CD4-positive, alpha-beta memory T cell (primary cell): ENCODE measurements at regions of chr3 and their contacts with region 1.

Region 1: GRCh38 chr3:39406368-39407258 is at the start of gene RPSA:
- DNase-seq: peak; percentile 91 to 99 (median 99)
- H3K4me3 ChIP-seq: peak within 1 kb of the TSS; percentile 31 to 72
- H3K4me3 Mint-ChIP-seq: peak within 1 kb of the TSS; percentile 88 to 99 (median 96)
- H3K27ac ChIP-seq: peak within 1 kb of the TSS; percentile 81
- H3K27ac Mint-ChIP-seq: peak within 1 kb of the TSS; percentile 88 to 99 (median 98)
- H3K4me1 ChIP-seq: peaks cover 47% of the 10 kb centered on the region
- H3K4me1 Mint-ChIP-seq: peaks cover 30 to 54% (median 43%) of the 10 kb centered on the region in 4 donors
- H3K27me3 ChIP-seq: no peaks in the 10 kb centered on the region
- H3K27me3 Mint-ChIP-seq: no peaks in the 10 kb centered on the region
- total RNA-seq, gene RPSA: 1,582 to 1,688 TPM

Region 2: DNA sequence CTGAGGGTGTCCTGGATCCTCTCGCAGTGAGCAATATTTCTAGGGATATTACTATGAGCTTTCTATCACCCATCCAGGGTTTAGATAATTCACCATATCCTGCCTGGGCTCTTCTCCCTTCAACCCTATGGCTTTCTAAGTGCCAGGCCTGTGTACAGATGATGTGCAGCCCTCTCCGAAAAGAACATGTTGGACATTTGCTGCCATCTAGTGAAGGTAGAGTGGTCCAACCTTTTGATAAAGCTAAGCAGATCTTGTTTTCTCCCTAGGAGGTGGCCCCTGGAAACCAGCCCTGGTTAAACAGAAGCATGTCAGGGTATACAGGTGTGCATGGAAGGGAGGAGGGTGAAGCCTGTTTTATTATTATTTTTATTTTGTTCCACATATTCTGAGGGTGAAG is 562.7 kb before region 1 on chr3:
- CTCF ChIA-PET with region 1: no interaction called
- POLR2A ChIA-PET with region 1: no interaction called
- intact Hi-C with region 1: no loop called
- DNase-seq: no peak
- H3K4me3 ChIP-seq: no peak overlapping the region
- H3K4me3 Mint-ChIP-seq: no peak overlapping the region
- H3K27ac ChIP-seq: no peak overlapping the region
- H3K27ac Mint-ChIP-seq: no peak overlapping the region
- H3K4me1 ChIP-seq: no peaks in the 10 kb centered on the region
- H3K4me1 Mint-ChIP-seq: no peaks in the 10 kb centered on the region
- H3K27me3 ChIP-seq: no peaks in the 10 kb centered on the region
- H3K27me3 Mint-ChIP-seq: peaks cover 7 to 12% of the 10 kb centered on the region in 2 donors

Region 3: DNA sequence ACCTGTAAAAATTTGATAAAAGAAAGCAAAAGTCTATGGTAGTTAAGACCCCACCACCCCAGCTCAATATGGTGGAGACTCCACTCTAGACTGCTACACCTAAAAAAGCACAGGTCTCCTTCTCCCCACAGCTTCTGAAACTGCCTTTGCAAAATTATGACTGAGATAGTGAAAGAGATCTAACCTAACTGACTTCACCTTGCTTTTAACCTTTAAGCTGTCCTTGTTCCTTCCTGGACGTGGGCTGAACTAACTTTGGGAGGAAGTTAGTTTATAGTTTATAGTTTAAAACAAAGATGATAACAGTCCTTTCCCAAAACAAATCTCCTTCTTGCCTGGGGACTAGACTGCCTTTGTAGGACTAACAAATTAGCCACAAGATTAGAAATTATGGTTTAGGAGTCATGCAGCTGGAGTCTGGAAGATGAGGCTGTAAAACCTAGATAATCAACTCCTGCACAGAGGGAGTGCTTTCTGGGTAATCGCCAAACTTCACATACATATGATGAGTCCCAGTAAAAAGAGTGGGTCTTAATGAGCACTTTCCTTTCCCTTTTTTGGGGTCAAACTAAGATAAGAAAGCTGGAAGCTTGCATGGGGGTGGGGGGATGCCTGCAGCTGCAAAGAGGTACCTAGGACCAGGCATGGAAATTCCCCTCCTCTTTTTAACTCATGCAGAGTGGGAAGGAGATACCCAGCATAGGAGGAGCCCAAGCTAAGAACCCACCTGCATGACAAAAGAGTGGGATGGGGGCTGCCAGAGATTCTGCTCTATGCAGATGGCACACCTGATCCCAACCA is 59.6 kb before region 1 on chr3:
- CTCF ChIA-PET with region 1: no interaction called
- POLR2A ChIA-PET with region 1: no interaction called
- intact Hi-C with region 1: no loop called
- DNase-seq: no peak
- H3K4me3 ChIP-seq: no peak overlapping the region
- H3K4me3 Mint-ChIP-seq: peak overlapping the region in 4 of 8 donors; percentile 2 to 55 (median 32)
- H3K27ac ChIP-seq: no peak overlapping the region
- H3K27ac Mint-ChIP-seq: peak overlapping the region; percentile 0 to 78 (median 31)
- H3K4me1 ChIP-seq: peaks cover 24% of the 10 kb centered on the region
- H3K4me1 Mint-ChIP-seq: peaks cover 9 to 57% (median 32%) of the 10 kb centered on the region in 4 donors
- H3K27me3 ChIP-seq: no peaks in the 10 kb centered on the region
- H3K27me3 Mint-ChIP-seq: no peaks in the 10 kb centered on the region

Region 4: GRCh38 chr3:39383045-39383880 is 23.4 kb before region 1 on chr3 and contains the start of gene SLC25A38:
- CTCF ChIA-PET with region 1: interaction called, 17 read pairs
- POLR2A ChIA-PET with region 1: interaction called, 75 read pairs
- intact Hi-C with region 1: loop called (anchors 1 kb)
- DNase-seq: peak; percentile 82 to 90 (median 85)
- H3K4me3 ChIP-seq: peak within 1 kb of the TSS; percentile 91 to 92
- H3K4me3 Mint-ChIP-seq: peak within 1 kb of the TSS; percentile 96 to 100 (median 98)
- H3K27ac ChIP-seq: peak within 1 kb of the TSS; percentile 93
- H3K27ac Mint-ChIP-seq: peak within 1 kb of the TSS; percentile 97 to 100 (median 100)
- H3K4me1 ChIP-seq: peaks cover 46% of the 10 kb centered on the region
- H3K4me1 Mint-ChIP-seq: peaks cover 31 to 53% (median 44%) of the 10 kb centered on the region in 4 donors
- H3K27me3 ChIP-seq: no peaks in the 10 kb centered on the region
- H3K27me3 Mint-ChIP-seq: no peaks in the 10 kb centered on the region
- total RNA-seq, gene SLC25A38: 46.0 to 53.5 TPM

Region 5: GRCh38 chr3:39497753-39498152 is 91.1 kb after region 1 on chr3:
- CTCF ChIA-PET with region 1: interaction called, 4 read pairs
- POLR2A ChIA-PET with region 1: no interaction called
- intact Hi-C with region 1: loop called (anchors 1 kb)
- DNase-seq: no peak
- H3K4me3 ChIP-seq: no peak overlapping the region
- H3K4me3 Mint-ChIP-seq: no peak overlapping the region
- H3K27ac ChIP-seq: no peak overlapping the region
- H3K27ac Mint-ChIP-seq: no peak overlapping the region
- H3K4me1 ChIP-seq: no peaks in the 10 kb centered on the region
- H3K4me1 Mint-ChIP-seq: peaks cover 0 to 3% (median 1%) of the 10 kb centered on the region in 4 donors
- H3K27me3 ChIP-seq: peaks cover 12% of the 10 kb centered on the region
- H3K27me3 Mint-ChIP-seq: peaks cover 27 to 32% of the 10 kb centered on the region in 2 donors

Region 6: DNA sequence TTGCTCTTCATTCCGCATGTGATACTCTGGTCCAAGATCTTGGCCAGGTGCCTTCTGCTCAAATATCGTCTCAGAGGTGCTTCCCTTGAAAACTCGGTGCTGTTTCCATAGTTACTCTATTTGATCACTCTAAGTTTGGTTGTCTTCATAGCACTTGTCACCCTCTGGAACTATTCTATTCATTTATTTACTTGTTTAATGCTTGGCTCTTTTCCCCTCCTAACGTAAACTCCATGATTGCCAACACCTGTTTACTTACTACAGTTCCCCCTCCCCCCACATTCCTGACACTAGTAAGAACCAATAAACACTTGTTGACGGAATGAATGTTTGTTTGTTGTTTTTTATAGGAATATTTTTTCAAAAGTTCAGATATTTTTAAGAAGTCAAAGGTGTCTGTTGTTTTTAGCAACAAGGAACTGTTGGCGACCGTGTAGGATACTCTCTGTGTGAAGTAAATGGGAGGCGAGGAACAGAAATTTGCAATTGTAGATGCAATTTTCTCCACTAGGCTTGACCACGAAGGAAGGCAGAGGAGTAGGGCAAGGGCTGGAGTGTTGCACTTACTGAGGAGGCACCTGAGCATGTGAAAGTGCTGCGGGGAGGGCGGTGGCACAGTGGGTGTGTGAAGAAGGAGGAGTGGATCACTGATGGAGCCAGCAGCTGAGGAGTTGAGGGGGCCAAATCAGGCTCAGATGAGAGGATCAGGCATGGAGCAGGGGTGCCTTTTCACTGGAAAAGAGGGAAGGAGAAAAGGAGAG is 109.2 kb after region 1 on chr3:
- CTCF ChIA-PET with region 1: no interaction called
- POLR2A ChIA-PET with region 1: no interaction called
- intact Hi-C with region 1: no loop called
- DNase-seq: no peak
- H3K4me3 ChIP-seq: no peak overlapping the region
- H3K4me3 Mint-ChIP-seq: no peak overlapping the region
- H3K27ac ChIP-seq: no peak overlapping the region
- H3K27ac Mint-ChIP-seq: no peak overlapping the region
- H3K4me1 ChIP-seq: no peaks in the 10 kb centered on the region
- H3K4me1 Mint-ChIP-seq: peaks cover 0 to 2% (median 0%) of the 10 kb centered on the region in 4 donors
- H3K27me3 ChIP-seq: no peaks in the 10 kb centered on the region
- H3K27me3 Mint-ChIP-seq: peaks cover 12% of the 10 kb centered on the region in 2 donors

Region 7: GRCh38 chr3:39794880-39795279 is 388.3 kb after region 1 on chr3:
- CTCF ChIA-PET with region 1: no interaction called
- POLR2A ChIA-PET with region 1: no interaction called
- intact Hi-C with region 1: no loop called
- DNase-seq: no peak
- H3K4me3 ChIP-seq: no peak overlapping the region
- H3K4me3 Mint-ChIP-seq: no peak overlapping the region
- H3K27ac ChIP-seq: no peak overlapping the region
- H3K27ac Mint-ChIP-seq: no peak overlapping the region
- H3K4me1 ChIP-seq: no peaks in the 10 kb centered on the region
- H3K4me1 Mint-ChIP-seq: no peaks in the 10 kb centered on the region
- H3K27me3 ChIP-seq: no peaks in the 10 kb centered on the region
- H3K27me3 Mint-ChIP-seq: peaks cover 2 to 6% of the 10 kb centered on the region in 2 donors